MCF 10A (cell line): ENCODE measurements at regions of chrX and their contacts with region 1.

Region 1: GRCh38 chrX:110853610-110854009 is 58.0 kb upstream of the CHRDL1 start:
- DNase-seq: peak; percentile 67
- H3K4me3 Mint-ChIP-seq: no peak overlapping the region
- H3K27ac Mint-ChIP-seq: no peak overlapping the region
- H3K4me1 Mint-ChIP-seq: peaks cover 9% of the 10 kb centered on the region
- H3K27me3 Mint-ChIP-seq: peaks cover 61% of the 10 kb centered on the region
- CTCF ChIP-seq: peak; percentile 44

Region 2: GRCh38 chrX:110450050-110450449 is 403.6 kb before region 1 on chrX:
- CTCF ChIA-PET with region 1: interaction called, 28 read pairs
- POLR2A ChIA-PET with region 1: no interaction called
- intact Hi-C with region 1: no loop called
- DNase-seq: peak; percentile 84
- H3K4me3 Mint-ChIP-seq: no peak overlapping the region
- H3K27ac Mint-ChIP-seq: no peak overlapping the region
- H3K4me1 Mint-ChIP-seq: no peaks in the 10 kb centered on the region
- H3K27me3 Mint-ChIP-seq: peaks cover 80% of the 10 kb centered on the region
- CTCF ChIP-seq: peak; percentile 88

Region 3: DNA sequence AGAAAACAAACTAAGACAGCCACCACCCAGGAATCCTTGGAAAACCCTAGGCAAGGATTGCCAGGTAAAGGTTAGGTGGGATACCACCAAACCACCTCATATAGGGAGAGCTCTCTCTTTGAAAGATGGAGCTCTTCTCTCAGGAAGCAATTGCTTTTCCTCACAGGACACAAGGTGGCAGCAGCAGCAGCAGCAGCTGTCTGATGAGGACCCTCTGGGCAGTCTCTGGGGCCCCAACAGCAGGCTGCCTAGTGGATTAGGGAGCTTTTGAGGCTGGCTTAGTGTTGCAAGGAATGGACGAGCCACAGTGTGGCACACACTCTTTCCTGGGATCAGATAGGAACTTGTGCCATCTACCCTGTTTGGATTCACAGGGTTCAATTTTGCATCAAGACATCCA is 16.6 kb before region 1 on chrX:
- CTCF ChIA-PET with region 1: interaction called, 38 read pairs
- POLR2A ChIA-PET with region 1: no interaction called
- intact Hi-C with region 1: no loop called
- DNase-seq: no peak
- H3K4me3 Mint-ChIP-seq: no peak overlapping the region
- H3K27ac Mint-ChIP-seq: no peak overlapping the region
- H3K4me1 Mint-ChIP-seq: no peaks in the 10 kb centered on the region
- H3K27me3 Mint-ChIP-seq: peaks cover 45% of the 10 kb centered on the region
- CTCF ChIP-seq: peak; percentile 7

Region 4: DNA sequence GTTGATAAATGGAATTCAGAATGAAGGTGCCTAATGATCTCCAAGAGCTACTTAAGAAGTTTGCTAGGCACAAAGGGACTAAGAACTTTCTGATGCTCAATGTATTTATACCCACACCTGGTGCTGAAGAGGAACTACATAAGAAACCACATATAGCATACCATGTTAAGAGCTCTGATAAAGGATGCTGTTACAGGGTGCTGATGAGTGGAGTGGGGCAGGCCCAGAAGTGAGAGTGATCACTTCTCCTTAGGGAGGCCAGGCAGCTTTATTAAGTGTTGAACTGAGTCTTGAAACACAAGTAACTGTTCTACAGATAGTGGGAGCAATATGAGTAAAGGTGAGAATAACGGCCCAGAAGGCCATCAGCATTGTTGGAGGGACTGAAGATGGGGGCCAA is 10.3 kb after region 1 on chrX:
- CTCF ChIA-PET with region 1: interaction called, 19 read pairs
- POLR2A ChIA-PET with region 1: interaction called, 4 read pairs
- intact Hi-C with region 1: no loop called
- DNase-seq: no peak
- H3K4me3 Mint-ChIP-seq: no peak overlapping the region
- H3K27ac Mint-ChIP-seq: no peak overlapping the region
- H3K4me1 Mint-ChIP-seq: no peaks in the 10 kb centered on the region
- H3K27me3 Mint-ChIP-seq: peaks cover 75% of the 10 kb centered on the region
- CTCF ChIP-seq: no peak

Region 5: DNA sequence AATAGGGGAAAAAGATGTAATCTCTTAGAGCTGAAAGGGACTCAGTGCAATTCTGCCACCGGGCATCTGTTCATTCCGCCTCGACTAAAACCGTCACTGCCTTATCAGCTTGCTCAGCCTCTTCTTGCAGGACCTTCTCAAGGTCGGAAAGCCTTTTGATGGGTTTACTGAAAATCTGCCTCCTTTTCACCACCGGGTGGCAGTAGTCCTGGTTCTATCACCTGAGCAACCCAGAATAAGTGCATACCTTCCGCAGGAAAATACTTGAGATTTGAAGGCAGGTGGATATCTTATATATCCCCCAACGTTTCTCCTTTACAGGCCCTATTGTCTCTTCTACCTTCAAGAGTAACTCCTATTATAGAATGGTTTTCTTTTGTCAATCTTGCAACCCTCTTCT is 139.0 kb after region 1 on chrX:
- CTCF ChIA-PET with region 1: interaction called, 14 read pairs
- POLR2A ChIA-PET with region 1: no interaction called
- intact Hi-C with region 1: loop called (anchors 2 kb)
- DNase-seq: peak; percentile 51
- H3K4me3 Mint-ChIP-seq: no peak overlapping the region
- H3K27ac Mint-ChIP-seq: no peak overlapping the region
- H3K4me1 Mint-ChIP-seq: no peaks in the 10 kb centered on the region
- H3K27me3 Mint-ChIP-seq: peaks cover 67% of the 10 kb centered on the region
- CTCF ChIP-seq: peak; percentile 34

Region 6: GRCh38 chrX:111098874-111099273 is 245.3 kb after region 1 on chrX:
- CTCF ChIA-PET with region 1: interaction called, 57 read pairs
- POLR2A ChIA-PET with region 1: interaction called, 6 read pairs
- intact Hi-C with region 1: loop called (anchors 1 kb)
- DNase-seq: peak; percentile 23
- H3K4me3 Mint-ChIP-seq: no peak overlapping the region
- H3K27ac Mint-ChIP-seq: no peak overlapping the region
- H3K4me1 Mint-ChIP-seq: no peaks in the 10 kb centered on the region
- H3K27me3 Mint-ChIP-seq: peaks cover 42% of the 10 kb centered on the region
- CTCF ChIP-seq: peak; percentile 48